ENCODE measurements at regions of chr3 and their contacts with region 1.

Region 1: DNA sequence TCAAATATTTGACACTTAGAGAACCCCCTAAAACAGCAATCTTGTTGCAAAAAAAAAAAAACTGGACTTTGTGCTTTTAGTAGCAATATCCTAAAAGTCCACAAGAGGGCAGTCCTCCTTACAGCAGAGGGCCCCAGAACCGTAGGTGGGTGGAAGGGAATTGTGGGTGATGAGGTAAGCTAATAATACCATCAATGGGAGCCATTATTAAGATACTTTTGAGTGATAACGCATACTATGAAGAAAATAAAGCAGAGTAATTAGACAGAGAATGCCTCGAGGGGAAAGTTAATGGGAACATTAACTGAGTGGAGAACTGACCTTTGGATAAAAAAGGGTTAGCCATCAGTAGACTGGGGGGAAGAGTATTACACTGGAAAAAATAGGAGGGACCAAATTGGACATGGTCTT is 229.9 kb downstream of the THRB start:
- DNase-seq: peak in 1 of 3 donors; percentile 35
- ATAC-seq: peak; percentile 69
- H3K4me3 ChIP-seq: no peak overlapping the region
- H3K4me1 ChIP-seq: no peaks in the 10 kb centered on the region
- CTCF ChIP-seq: peak; percentile 5

Region 2: GRCh38 chr3:24145981-24146822 is 118.6 kb before region 1 on chr3:
- intact Hi-C with region 1: no loop called
- DNase-seq: no peak
- ATAC-seq: no peak
- H3K4me3 ChIP-seq: no peak overlapping the region
- H3K4me1 ChIP-seq: no peaks in the 10 kb centered on the region
- CTCF ChIP-seq: no peak

Region 3: DNA sequence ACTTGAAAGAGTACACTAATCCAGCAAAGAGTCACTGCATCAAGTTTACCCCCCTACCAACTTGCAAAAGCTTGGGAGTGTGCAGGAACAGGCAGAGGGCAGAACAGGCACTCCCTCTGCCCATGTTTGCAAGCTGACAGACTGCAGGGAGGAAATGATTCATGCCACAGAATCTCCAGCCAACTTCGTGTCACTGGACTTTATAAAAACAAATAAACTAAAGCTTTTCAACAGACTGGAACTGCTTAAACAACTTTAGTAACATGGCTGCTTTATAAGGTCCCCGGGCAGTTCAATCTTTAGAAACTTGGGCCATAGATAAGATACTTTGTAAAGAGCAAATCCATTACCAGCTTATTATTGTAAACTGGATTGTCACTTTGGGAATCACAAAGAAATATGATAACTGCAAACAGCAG is 100.5 kb after region 1 on chr3:
- intact Hi-C with region 1: no loop called
- DNase-seq: peak; percentile 46 to 76 (median 50)
- ATAC-seq: peak; percentile 96
- H3K4me3 ChIP-seq: no peak overlapping the region
- H3K4me1 ChIP-seq: peaks cover 31% of the 10 kb centered on the region
- CTCF ChIP-seq: no peak

Region 4: DNA sequence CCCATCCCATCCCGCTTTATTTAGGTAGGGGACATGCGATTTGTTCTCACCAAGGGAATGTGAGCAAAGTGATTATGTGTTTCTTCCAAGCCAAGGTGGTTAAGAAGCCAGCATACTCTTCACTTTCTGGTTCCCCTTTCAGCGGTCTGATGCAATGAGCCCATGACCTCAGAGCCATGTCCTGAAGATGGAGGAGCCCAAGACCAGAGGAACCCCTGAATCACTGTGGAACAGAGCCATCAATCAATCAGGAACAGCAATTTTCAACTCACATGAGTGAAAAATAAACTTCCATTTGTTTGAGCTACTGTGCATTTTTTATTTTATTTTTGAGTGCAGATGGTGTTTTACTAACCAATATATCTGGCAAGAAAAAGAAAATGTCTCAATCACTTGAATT is 219.1 kb after region 1 on chr3:
- intact Hi-C with region 1: loop called in 1 of 2 experiments (anchors 10 kb)
- DNase-seq: peak in 1 of 3 donors; percentile 28
- ATAC-seq: no peak
- H3K4me3 ChIP-seq: no peak overlapping the region
- H3K4me1 ChIP-seq: peaks cover 11% of the 10 kb centered on the region
- CTCF ChIP-seq: no peak

Region 5: GRCh38 chr3:24494618-24495325 is 230.0 kb after region 1 on chr3 and contains the start of gene THRB:
- intact Hi-C with region 1: loop called (anchors 10 kb)
- DNase-seq: peak; percentile 80 to 86 (median 80)
- ATAC-seq: peak; percentile 82
- H3K4me3 ChIP-seq: peak within 1 kb of the TSS; percentile 46
- H3K4me1 ChIP-seq: peaks cover 7% of the 10 kb centered on the region
- CTCF ChIP-seq: peak; percentile 9
- total RNA-seq, gene THRB: 25.1 to 75.5 (median 59.8) TPM

Region 6: GRCh38 chr3:24582431-24583403 is 318.0 kb after region 1 on chr3:
- intact Hi-C with region 1: loop called in 1 of 2 experiments (anchors 10 kb)
- DNase-seq: no peak
- ATAC-seq: peak; percentile 45
- H3K4me3 ChIP-seq: no peak overlapping the region
- H3K4me1 ChIP-seq: no peaks in the 10 kb centered on the region
- CTCF ChIP-seq: no peak